Esophagus muscularis mucosa (tissue), 4 donors: ENCODE measurements at regions of chr4 and their contacts with region 1.

Region 1: GRCh38 chr4:151362404-151363164 is 37.2 kb upstream of the SH3D19 start:
- DNase-seq: no peak
- H3K4me3 ChIP-seq: no peak overlapping the region
- H3K27ac ChIP-seq: no peak overlapping the region
- H3K4me1 ChIP-seq: peaks cover 0 to 8% (median 0%) of the 10 kb centered on the region in 4 donors
- H3K27me3 ChIP-seq: no peaks in the 10 kb centered on the region
- CTCF ChIP-seq: peak in 2 of 3 experiments; percentile 96 to 98
- EP300 ChIP-seq: no peak
- POLR2A ChIP-seq: no peak

Region 2: DNA sequence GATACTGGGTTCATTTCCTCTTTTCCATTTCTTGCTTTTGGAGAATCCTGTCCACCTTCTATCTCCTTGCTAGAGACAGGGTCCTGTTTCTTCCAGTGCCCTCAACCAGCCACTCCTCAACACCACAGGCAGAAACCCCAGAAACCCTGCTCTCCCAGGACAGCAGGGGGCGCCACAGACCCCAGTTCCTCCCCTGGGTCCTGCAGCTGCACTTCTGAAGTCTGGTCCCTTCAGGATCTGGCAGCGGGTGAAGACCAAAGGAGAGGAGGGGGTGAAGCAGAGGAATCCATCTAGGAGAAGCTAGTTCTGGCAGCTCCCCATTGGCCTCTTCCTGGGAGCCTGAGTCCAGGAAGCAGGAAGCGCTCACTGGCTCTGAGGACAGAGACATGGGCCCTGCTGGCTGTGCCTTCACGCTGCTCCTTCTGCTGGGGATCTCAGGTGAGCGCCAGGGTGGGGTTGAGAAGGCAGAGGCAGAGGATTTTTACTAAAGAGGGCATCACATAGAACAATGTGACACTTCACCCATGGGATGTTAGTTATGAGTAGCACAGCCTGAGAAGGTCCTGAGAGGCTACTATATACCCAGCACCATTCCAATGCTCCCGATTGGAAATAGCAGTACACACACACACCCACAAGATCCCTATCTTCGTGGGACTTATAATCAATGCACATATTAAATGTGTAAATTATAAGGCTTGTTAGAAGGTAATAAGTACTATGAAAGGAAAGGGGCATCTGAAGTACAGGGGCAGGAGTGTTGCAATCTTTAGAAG is 85.6 kb before region 1 on chr4 and contains the start of gene PRSS48:
- intact Hi-C with region 1: loop called (anchors 2 kb)
- DNase-seq: no peak
- H3K4me3 ChIP-seq: no peak within 1 kb of the TSS
- H3K27ac ChIP-seq: no peak within 1 kb of the TSS
- H3K4me1 ChIP-seq: peaks cover 12 to 32% (median 21%) of the 10 kb centered on the region in 4 donors
- H3K27me3 ChIP-seq: no peaks in the 10 kb centered on the region
- CTCF ChIP-seq: peak; percentile 51 to 72 (median 58)
- EP300 ChIP-seq: no peak
- POLR2A ChIP-seq: no peak
- total RNA-seq, gene PRSS48: not detected

Region 3: DNA sequence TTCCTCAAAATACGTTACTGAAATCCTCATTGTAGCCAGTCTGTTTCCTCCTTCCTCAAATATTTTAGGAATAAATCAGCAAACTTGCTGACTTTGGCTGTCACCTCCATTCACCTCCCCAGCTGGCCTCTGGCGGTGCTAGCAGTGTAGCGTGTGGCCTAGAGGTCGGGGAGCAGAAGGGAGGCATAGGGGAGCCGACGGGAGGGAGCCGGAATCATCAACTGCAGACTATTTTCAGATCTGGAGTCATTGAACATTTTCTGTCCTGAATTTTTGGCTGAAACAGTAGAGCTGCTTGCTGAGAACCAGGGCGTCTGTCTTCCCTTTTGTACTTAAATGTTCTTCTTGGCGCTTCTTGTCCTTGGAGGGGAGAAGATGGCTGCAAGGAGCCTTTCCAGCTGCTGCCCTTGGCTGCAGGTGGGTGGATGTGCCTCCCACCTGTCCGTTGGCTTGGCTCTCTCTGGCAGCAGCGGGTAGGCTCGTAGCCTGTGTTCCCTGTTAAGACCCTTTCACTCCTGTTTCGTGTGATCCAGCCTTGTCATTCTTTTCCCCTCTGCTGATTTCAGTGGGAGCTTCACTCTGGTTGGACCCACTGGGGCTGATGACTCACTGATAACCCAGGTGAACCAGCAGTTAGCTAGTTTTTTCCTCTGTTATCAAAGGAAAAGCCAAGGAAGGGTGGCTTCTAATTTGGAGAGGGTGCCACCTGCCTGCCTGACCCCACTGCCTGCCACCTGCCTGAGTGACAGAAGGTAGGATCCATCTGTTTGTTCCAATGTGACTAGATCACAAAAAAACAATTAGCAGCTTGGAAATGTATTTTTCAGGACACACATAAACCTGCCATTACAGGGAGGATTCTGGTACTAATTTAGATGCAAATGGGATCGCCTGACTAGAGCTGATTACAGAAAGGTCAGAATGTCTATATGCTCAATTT is 262.3 kb after region 1 on chr4:
- intact Hi-C with region 1: no loop called
- DNase-seq: no peak
- H3K4me3 ChIP-seq: no peak overlapping the region
- H3K27ac ChIP-seq: no peak overlapping the region
- H3K4me1 ChIP-seq: no peaks in the 10 kb centered on the region
- H3K27me3 ChIP-seq: no peaks in the 10 kb centered on the region
- CTCF ChIP-seq: no peak
- EP300 ChIP-seq: no peak
- POLR2A ChIP-seq: no peak